Transverse colon (tissue), 4 donors: ENCODE measurements at regions of chr10 and their contacts with region 1.

Region 1: GRCh38 chr10:6487920-6488319 is 92.2 kb downstream of the PRKCQ start:
- DNase-seq: no peak
- H3K4me3 ChIP-seq: no peak overlapping the region
- H3K27ac ChIP-seq: no peak overlapping the region
- H3K4me1 ChIP-seq: no peaks in the 10 kb centered on the region
- H3K27me3 ChIP-seq: no peaks in the 10 kb centered on the region
- CTCF ChIP-seq: no peak
- EP300 ChIP-seq: no peak
- POLR2A ChIP-seq: no peak

Region 2: DNA sequence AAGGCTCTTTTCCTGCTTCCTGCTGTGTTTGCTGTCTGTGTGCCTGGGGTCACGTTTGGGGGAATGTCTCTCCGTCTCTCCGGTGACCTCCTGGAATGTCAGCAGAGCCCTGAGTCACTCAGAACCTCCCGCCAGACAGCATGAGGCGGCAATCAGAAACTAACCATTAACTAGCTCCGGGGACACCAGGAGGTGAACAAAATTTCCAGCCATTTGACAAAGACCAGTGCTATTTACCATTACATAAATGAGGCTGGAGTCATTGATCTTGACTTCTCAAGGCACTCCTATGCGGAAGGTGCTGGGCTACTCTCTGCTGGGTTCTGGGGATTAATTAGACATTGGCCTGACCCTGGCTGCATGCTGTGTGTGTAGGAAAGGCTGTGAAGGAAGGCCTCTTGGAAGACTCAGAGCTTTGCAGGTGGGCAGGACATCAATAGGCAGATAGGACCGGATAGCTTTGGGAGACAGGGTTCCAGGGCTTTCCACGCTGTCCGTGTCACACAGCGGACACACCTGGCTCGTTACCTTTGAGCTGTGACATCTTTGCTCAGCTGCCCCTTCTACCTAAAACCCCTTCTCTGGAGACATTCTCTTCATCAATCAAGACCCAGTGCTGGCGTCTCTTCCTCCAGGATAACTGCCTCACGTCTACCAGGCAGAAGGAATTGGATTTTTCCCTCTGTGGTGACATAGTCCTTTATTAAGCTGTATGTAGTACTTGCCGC is 208.2 kb before region 1 on chr10:
- in situ Hi-C with region 1: no loop called
- intact Hi-C with region 1: no loop called
- DNase-seq: no peak
- H3K4me3 ChIP-seq: no peak overlapping the region
- H3K27ac ChIP-seq: no peak overlapping the region
- H3K4me1 ChIP-seq: peaks cover 0 to 5% (median 0%) of the 10 kb centered on the region in 4 donors
- H3K27me3 ChIP-seq: no peaks in the 10 kb centered on the region
- CTCF ChIP-seq: no peak
- EP300 ChIP-seq: no peak
- POLR2A ChIP-seq: no peak

Region 3: DNA sequence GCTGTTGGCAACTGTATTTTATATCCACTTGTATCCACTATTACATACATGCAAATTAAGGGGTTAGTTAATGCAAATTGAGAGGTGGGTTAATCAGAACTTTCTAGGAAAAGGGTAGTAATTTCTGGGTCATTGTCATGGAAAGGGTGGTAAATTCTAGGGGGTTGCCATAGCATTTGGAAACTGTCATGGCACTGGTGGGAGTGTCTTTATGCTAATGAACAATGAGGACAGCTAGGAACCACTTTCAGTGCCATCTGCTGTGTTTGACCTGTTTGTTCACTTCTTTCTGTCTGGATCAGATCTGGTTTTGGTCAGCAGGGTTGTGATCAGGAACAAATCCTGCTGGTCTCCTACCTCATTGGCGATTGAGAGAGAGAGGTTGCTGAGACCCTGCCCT is 375.5 kb after region 1 on chr10:
- in situ Hi-C with region 1: no loop called
- intact Hi-C with region 1: loop called (anchors 5 kb)
- DNase-seq: no peak
- H3K4me3 ChIP-seq: no peak overlapping the region
- H3K27ac ChIP-seq: no peak overlapping the region
- H3K4me1 ChIP-seq: no peaks in the 10 kb centered on the region
- H3K27me3 ChIP-seq: no peaks in the 10 kb centered on the region
- CTCF ChIP-seq: no peak
- EP300 ChIP-seq: no peak
- POLR2A ChIP-seq: no peak